ENCODE measurements at regions of chr14 and their contacts with region 1.

Region 1: DNA sequence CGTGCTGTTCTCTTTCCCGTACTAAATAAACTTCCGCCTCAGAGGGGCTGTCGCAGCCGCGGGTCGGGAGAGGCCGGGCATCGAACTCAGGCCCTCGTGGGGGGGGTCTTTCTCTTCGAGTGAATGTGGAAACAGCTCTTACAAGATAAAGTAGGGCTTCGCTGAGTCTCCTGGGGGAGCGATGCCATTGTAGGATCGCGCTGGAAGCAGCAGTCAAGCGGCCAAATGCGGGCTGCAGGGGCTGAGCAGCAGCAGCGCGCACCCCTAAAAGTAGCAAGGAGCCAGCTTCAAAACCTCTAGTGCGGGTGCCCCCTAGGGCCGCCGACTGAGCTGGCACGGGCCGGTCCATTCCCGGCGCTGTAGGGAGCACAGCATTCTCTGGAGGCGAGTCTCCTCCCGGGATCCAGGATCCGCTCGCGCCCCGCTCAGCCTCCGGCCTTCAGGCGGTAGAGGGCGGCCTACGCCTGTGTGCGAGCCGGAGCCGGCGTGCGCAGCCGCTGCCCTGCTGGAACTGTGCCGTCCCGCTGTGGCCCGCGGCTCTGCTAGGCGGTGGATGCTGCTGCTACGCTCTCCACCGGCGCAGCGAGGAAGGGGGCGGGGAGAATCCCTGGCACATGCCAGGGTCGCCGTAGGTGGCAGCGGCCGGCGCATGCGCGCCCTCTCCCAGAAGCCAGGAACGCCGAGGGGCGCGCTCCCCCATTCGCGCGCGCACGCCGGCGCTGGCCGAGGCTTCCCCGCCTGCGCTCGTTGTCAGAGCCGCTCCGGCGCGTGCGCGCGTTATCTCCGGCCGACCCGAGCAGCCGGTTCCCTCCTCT is at the start of gene FUT8:
- DNase-seq: peak; percentile 91 to 97 (median 95)
- H3K4me3 ChIP-seq: peak within 1 kb of the TSS; percentile 93 to 97
- H3K4me3 Mint-ChIP-seq: peak within 1 kb of the TSS; percentile 97 to 100 (median 99)
- H3K27ac ChIP-seq: peak within 1 kb of the TSS; percentile 79
- H3K27ac Mint-ChIP-seq: peak within 1 kb of the TSS; percentile 80 to 99 (median 98)
- H3K4me1 ChIP-seq: peaks cover 35% of the 10 kb centered on the region
- H3K4me1 Mint-ChIP-seq: peaks cover 27 to 45% (median 35%) of the 10 kb centered on the region in 4 donors
- H3K27me3 ChIP-seq: no peaks in the 10 kb centered on the region
- H3K27me3 Mint-ChIP-seq: no peaks in the 10 kb centered on the region
- total RNA-seq, gene FUT8: 49.3 to 51.0 TPM

Region 2: DNA sequence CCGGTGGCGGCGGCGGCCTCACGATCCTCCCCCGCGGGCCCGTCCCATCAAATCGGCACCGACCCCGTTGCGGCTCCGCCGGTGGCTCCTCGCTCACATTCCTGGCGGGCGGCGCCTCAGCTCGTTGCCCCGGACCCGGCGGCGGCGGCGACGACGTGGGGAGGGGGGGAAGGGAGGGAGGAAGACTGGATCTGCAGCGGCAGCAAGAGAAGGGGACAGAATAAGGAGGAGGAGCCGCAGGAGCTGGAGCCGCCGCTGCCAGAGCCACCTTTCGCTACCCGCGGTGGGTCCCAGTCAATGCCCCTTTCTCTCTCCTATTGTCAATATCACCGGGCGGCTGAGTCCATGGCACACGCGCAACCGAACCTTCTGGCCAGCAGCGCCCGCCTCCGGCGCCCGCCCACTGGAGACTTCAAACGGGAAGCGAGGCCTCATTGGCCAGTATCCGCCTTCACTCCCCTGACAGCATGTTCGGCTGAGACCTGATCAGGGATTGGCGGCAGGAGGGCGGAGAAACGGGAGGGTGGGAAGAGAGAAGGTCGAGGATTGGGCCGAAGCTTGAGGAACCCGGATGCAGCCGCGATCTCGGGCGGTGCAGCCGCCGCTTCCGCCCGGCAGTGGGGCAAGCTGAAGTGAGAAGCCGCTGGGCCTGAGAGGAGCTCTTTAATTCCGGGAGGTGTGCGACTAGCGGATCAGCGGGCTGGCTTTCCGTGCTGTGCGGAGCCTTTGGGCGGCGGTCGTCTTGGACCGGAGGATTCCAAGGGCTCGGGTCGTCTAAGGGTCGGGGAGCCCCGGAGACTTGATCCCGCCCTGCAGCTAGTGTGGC is 1869.0 kb before region 1 on chr14 and contains the start of gene PPP2R5E:
- CTCF ChIA-PET with region 1: no interaction called
- POLR2A ChIA-PET with region 1: no interaction called
- intact Hi-C with region 1: loop called (anchors 5 kb)
- DNase-seq: peak; percentile 97 to 99 (median 98)
- H3K4me3 ChIP-seq: peak within 1 kb of the TSS; percentile 68 to 83
- H3K4me3 Mint-ChIP-seq: peak within 1 kb of the TSS; percentile 97 to 99 (median 98)
- H3K27ac ChIP-seq: peak within 1 kb of the TSS; percentile 91
- H3K27ac Mint-ChIP-seq: peak within 1 kb of the TSS; percentile 92 to 98 (median 97)
- H3K4me1 ChIP-seq: peaks cover 26% of the 10 kb centered on the region
- H3K4me1 Mint-ChIP-seq: peaks cover 26 to 48% (median 33%) of the 10 kb centered on the region in 4 donors
- H3K27me3 ChIP-seq: no peaks in the 10 kb centered on the region
- H3K27me3 Mint-ChIP-seq: peaks cover 0 to 1% of the 10 kb centered on the region in 2 donors
- total RNA-seq, gene PPP2R5E: 36.2 to 38.0 TPM

Region 3: DNA sequence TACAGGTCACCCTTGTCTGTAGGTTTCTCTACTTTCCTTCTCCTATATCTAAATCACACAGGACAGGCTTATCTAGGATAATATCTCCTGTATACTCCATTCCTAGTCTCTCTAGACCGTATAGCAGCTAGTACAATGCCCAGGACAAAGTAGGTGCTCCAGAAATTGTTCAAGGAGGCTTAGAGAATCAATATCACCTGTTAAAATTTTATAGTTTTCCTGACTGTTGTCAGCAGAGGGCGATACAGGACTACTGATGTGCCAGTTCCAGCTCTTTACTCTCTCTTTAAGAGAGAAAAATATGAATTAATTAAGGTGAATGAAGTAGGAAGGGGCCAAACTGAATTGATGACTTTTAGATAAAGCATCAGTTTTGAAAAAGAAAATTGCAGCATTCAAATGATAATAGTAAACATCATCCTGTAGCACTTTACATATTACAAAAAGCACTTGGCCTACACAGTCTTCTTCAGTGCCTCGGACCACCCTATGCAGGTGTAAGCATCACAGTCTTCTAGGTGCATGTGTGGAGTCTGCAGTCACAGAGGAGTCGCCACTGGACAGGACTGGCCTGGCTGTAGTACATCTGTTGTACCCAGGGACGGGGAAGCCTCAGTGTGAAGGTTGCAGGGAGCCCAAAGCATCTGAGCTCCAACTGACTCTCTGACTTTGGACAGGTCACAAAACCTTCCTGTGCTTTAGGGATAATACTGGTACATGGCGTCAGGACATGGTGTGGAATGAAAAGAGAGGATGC is 248.0 kb before region 1 on chr14:
- CTCF ChIA-PET with region 1: interaction called, 32 read pairs
- POLR2A ChIA-PET with region 1: interaction called, 27 read pairs
- intact Hi-C with region 1: loop called (anchors 5 kb)
- DNase-seq: peak in 4 of 5 donors; percentile 57 to 64 (median 59)
- H3K4me3 ChIP-seq: no peak overlapping the region
- H3K4me3 Mint-ChIP-seq: no peak overlapping the region
- H3K27ac ChIP-seq: no peak overlapping the region
- H3K27ac Mint-ChIP-seq: no peak overlapping the region
- H3K4me1 ChIP-seq: no peaks in the 10 kb centered on the region
- H3K4me1 Mint-ChIP-seq: peaks cover 0 to 7% (median 5%) of the 10 kb centered on the region in 4 donors
- H3K27me3 ChIP-seq: no peaks in the 10 kb centered on the region
- H3K27me3 Mint-ChIP-seq: no peaks in the 10 kb centered on the region

Region 4: GRCh38 chr14:65222440-65222858 is 189.8 kb before region 1 on chr14:
- CTCF ChIA-PET with region 1: interaction called, 131 read pairs
- POLR2A ChIA-PET with region 1: interaction called, 75 read pairs
- intact Hi-C with region 1: loop called (anchors 1 kb)
- DNase-seq: peak; percentile 45 to 55 (median 48)
- H3K4me3 ChIP-seq: no peak overlapping the region
- H3K4me3 Mint-ChIP-seq: peak overlapping the region in 1 of 8 donors; percentile 64
- H3K27ac ChIP-seq: no peak overlapping the region
- H3K27ac Mint-ChIP-seq: peak overlapping the region; percentile 0 to 83 (median 42)
- H3K4me1 ChIP-seq: peaks cover 34% of the 10 kb centered on the region
- H3K4me1 Mint-ChIP-seq: peaks cover 23 to 59% (median 38%) of the 10 kb centered on the region in 4 donors
- H3K27me3 ChIP-seq: no peaks in the 10 kb centered on the region
- H3K27me3 Mint-ChIP-seq: no peaks in the 10 kb centered on the region

Region 5: GRCh38 chr14:65604936-65605335 is 192.7 kb after region 1 on chr14:
- CTCF ChIA-PET with region 1: no interaction called
- POLR2A ChIA-PET with region 1: no interaction called
- intact Hi-C with region 1: loop called (anchors 10 kb)
- DNase-seq: no peak
- H3K4me3 ChIP-seq: no peak overlapping the region
- H3K4me3 Mint-ChIP-seq: no peak overlapping the region
- H3K27ac ChIP-seq: no peak overlapping the region
- H3K27ac Mint-ChIP-seq: peak overlapping the region in 1 of 7 donors; percentile 70
- H3K4me1 ChIP-seq: peaks cover 10% of the 10 kb centered on the region
- H3K4me1 Mint-ChIP-seq: peaks cover 0 to 10% (median 10%) of the 10 kb centered on the region in 4 donors
- H3K27me3 ChIP-seq: no peaks in the 10 kb centered on the region
- H3K27me3 Mint-ChIP-seq: no peaks in the 10 kb centered on the region

Region 6: GRCh38 chr14:65723348-65723747 is 311.1 kb after region 1 on chr14:
- CTCF ChIA-PET with region 1: no interaction called
- POLR2A ChIA-PET with region 1: no interaction called
- intact Hi-C with region 1: no loop called
- DNase-seq: no peak
- H3K4me3 ChIP-seq: no peak overlapping the region
- H3K4me3 Mint-ChIP-seq: peak overlapping the region in 1 of 8 donors; percentile 15
- H3K27ac ChIP-seq: no peak overlapping the region
- H3K27ac Mint-ChIP-seq: peak overlapping the region in 6 of 7 donors; percentile 20 to 78 (median 44)
- H3K4me1 ChIP-seq: peaks cover 17% of the 10 kb centered on the region
- H3K4me1 Mint-ChIP-seq: peaks cover 9 to 35% (median 26%) of the 10 kb centered on the region in 4 donors
- H3K27me3 ChIP-seq: no peaks in the 10 kb centered on the region
- H3K27me3 Mint-ChIP-seq: no peaks in the 10 kb centered on the region

Region 7: GRCh38 chr14:65832431-65833266 is 420.4 kb after region 1 on chr14:
- CTCF ChIA-PET with region 1: interaction called, 10 read pairs
- POLR2A ChIA-PET with region 1: interaction called, 5 read pairs
- intact Hi-C with region 1: no loop called
- DNase-seq: no peak
- H3K4me3 ChIP-seq: no peak overlapping the region
- H3K4me3 Mint-ChIP-seq: no peak overlapping the region
- H3K27ac ChIP-seq: no peak overlapping the region
- H3K27ac Mint-ChIP-seq: peak overlapping the region in 1 of 7 donors; percentile 41
- H3K4me1 ChIP-seq: peaks cover 16% of the 10 kb centered on the region
- H3K4me1 Mint-ChIP-seq: peaks cover 27 to 37% (median 30%) of the 10 kb centered on the region in 4 donors
- H3K27me3 ChIP-seq: no peaks in the 10 kb centered on the region
- H3K27me3 Mint-ChIP-seq: no peaks in the 10 kb centered on the region

Region 8: GRCh38 chr14:66070509-66071319 is 658.5 kb after region 1 on chr14:
- CTCF ChIA-PET with region 1: interaction called, 120 read pairs
- POLR2A ChIA-PET with region 1: interaction called, 4 read pairs
- intact Hi-C with region 1: loop called (anchors 1 kb)
- DNase-seq: peak; percentile 52 to 70 (median 53)
- H3K4me3 ChIP-seq: no peak overlapping the region
- H3K4me3 Mint-ChIP-seq: peak overlapping the region in 1 of 8 donors; percentile 27
- H3K27ac ChIP-seq: no peak overlapping the region
- H3K27ac Mint-ChIP-seq: peak overlapping the region in 3 of 7 donors; percentile 36 to 54 (median 37)
- H3K4me1 ChIP-seq: no peaks in the 10 kb centered on the region
- H3K4me1 Mint-ChIP-seq: peaks cover 3 to 6% (median 6%) of the 10 kb centered on the region in 4 donors
- H3K27me3 ChIP-seq: no peaks in the 10 kb centered on the region
- H3K27me3 Mint-ChIP-seq: peaks cover 0 to 4% of the 10 kb centered on the region in 2 donors

Measured in CD4-positive, alpha-beta memory T cell (primary cell).